CD8-positive, alpha-beta T cell (primary cell): ENCODE measurements at regions of chr19 and their contacts with region 1.

Region 1: DNA sequence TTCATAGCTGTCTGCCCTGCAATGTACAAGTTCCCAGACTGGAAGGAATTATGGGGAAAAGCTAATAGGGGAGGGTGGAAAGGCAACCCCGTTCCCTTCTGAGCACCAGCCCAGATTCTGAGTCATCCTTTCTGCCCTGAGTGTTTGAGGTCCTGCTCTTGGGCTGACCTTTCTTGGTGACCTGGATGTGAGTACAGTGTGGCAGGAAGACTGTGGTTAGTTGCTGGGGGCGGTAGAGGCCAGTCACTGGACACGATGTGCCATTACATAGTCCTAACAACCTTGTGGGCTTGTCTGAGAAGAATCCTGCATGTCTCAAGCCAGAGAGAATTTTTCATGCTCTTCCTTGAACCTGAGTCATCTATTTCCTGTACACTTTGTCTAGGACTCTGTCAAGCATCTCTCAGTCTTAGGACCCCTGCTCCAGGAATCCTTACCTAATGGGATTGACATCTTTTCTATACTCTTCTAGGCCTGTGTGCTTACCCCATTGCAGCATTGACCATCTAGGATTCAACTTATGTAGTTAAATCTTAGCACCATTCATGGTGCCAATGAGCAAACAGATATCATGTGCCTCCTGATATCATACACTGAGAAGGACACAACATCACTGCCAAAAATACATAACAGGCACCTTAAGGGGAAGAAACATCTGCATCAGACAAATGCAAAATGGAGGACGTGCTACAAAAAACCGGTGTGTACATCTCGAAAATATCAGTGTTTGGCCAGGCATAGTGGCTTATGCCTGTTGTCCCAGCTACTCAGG is 8.1 kb upstream of the ANGPTL4 start:
- DNase-seq: no peak
- ATAC-seq: no peak
- H3K4me3 ChIP-seq: no peak overlapping the region
- H3K4me3 Mint-ChIP-seq: no peak overlapping the region
- H3K27ac ChIP-seq: no peak overlapping the region
- H3K27ac Mint-ChIP-seq: no peak overlapping the region
- H3K4me1 ChIP-seq: peaks cover 7% of the 10 kb centered on the region
- H3K4me1 Mint-ChIP-seq: no peaks in the 10 kb centered on the region
- H3K27me3 ChIP-seq: peaks cover 0 to 21% of the 10 kb centered on the region in 2 experiments
- H3K27me3 Mint-ChIP-seq: peaks cover 13% of the 10 kb centered on the region
- CTCF ChIP-seq: no peak

Region 2: DNA sequence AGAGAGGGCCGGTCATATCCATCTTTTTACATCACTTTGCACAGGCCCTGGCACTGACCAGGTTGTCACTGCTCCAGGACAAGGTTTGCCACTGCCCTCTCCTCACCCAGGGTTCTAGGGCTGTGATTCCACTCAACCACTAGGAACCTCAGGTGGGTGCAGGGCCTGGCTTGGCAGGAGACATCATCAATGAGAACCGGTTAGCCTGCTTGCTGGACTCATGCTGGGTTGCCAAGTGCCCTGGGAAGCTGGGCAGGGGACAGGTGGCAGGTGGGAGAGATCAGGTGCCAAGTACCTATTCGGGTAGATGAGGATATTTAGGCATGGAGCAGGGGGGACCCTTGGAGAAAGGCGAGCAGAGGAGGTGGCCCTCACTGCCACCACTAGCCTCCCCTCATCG is 150.9 kb before region 1 on chr19:
- CTCF ChIA-PET with region 1: no interaction called
- POLR2A ChIA-PET with region 1: no interaction called
- intact Hi-C with region 1: no loop called
- DNase-seq: no peak
- ATAC-seq: no peak
- H3K4me3 ChIP-seq: no peak overlapping the region
- H3K4me3 Mint-ChIP-seq: no peak overlapping the region
- H3K27ac ChIP-seq: no peak overlapping the region
- H3K27ac Mint-ChIP-seq: no peak overlapping the region
- H3K4me1 ChIP-seq: peaks cover 7% of the 10 kb centered on the region
- H3K4me1 Mint-ChIP-seq: peaks cover 6% of the 10 kb centered on the region
- H3K27me3 ChIP-seq: no peaks in the 10 kb centered on the region
- H3K27me3 Mint-ChIP-seq: no peaks in the 10 kb centered on the region
- CTCF ChIP-seq: no peak

Region 3: GRCh38 chr19:8342684-8343482 is 12.9 kb before region 1 on chr19 and contains the start of gene KANK3:
- CTCF ChIA-PET with region 1: interaction called, 26 read pairs
- POLR2A ChIA-PET with region 1: interaction called, 4 read pairs
- intact Hi-C with region 1: no loop called
- DNase-seq: peak; percentile 84 to 96 (median 91)
- ATAC-seq: peak; percentile 99
- H3K4me3 ChIP-seq: peak within 1 kb of the TSS; percentile 70 to 86
- H3K4me3 Mint-ChIP-seq: peak within 1 kb of the TSS; percentile 79
- H3K27ac ChIP-seq: peak within 1 kb of the TSS; percentile 42 to 78
- H3K27ac Mint-ChIP-seq: peak within 1 kb of the TSS; percentile 22
- H3K4me1 ChIP-seq: peaks cover 13% of the 10 kb centered on the region
- H3K4me1 Mint-ChIP-seq: peaks cover 5% of the 10 kb centered on the region
- H3K27me3 ChIP-seq: peaks cover 0 to 3% of the 10 kb centered on the region in 2 experiments
- H3K27me3 Mint-ChIP-seq: peaks cover 7% of the 10 kb centered on the region
- CTCF ChIP-seq: no peak
- total RNA-seq, gene KANK3: 0.78 to 1.4 TPM

Region 4: GRCh38 chr19:8396563-8397203 is 40.9 kb after region 1 on chr19:
- CTCF ChIA-PET with region 1: interaction called, 34 read pairs
- POLR2A ChIA-PET with region 1: no interaction called
- intact Hi-C with region 1: loop called in 1 of 2 experiments (anchors 1 kb)
- DNase-seq: peak; percentile 49 to 88 (median 69)
- ATAC-seq: peak; percentile 98
- H3K4me3 ChIP-seq: no peak overlapping the region
- H3K4me3 Mint-ChIP-seq: peak overlapping the region; percentile 6
- H3K27ac ChIP-seq: peak overlapping the region in 1 of 2 experiments; percentile 15
- H3K27ac Mint-ChIP-seq: peak overlapping the region; percentile 71
- H3K4me1 ChIP-seq: peaks cover 23% of the 10 kb centered on the region
- H3K4me1 Mint-ChIP-seq: peaks cover 31% of the 10 kb centered on the region
- H3K27me3 ChIP-seq: no peaks in the 10 kb centered on the region
- H3K27me3 Mint-ChIP-seq: no peaks in the 10 kb centered on the region
- CTCF ChIP-seq: peak; percentile 60

Region 5: GRCh38 chr19:8585894-8586750 is 230.3 kb after region 1 on chr19:
- CTCF ChIA-PET with region 1: interaction called, 32 read pairs
- POLR2A ChIA-PET with region 1: no interaction called
- intact Hi-C with region 1: loop called (anchors 5 kb)
- DNase-seq: peak in 8 of 9 experiments; percentile 28 to 77 (median 66)
- ATAC-seq: peak; percentile 70
- H3K4me3 ChIP-seq: no peak overlapping the region
- H3K4me3 Mint-ChIP-seq: no peak overlapping the region
- H3K27ac ChIP-seq: no peak overlapping the region
- H3K27ac Mint-ChIP-seq: no peak overlapping the region
- H3K4me1 ChIP-seq: peaks cover 2% of the 10 kb centered on the region
- H3K4me1 Mint-ChIP-seq: peaks cover 4% of the 10 kb centered on the region
- H3K27me3 ChIP-seq: no peaks in the 10 kb centered on the region
- H3K27me3 Mint-ChIP-seq: no peaks in the 10 kb centered on the region
- CTCF ChIP-seq: peak; percentile 23

Region 6: GRCh38 chr19:8846819-8847218 is 491.0 kb after region 1 on chr19:
- CTCF ChIA-PET with region 1: no interaction called
- POLR2A ChIA-PET with region 1: no interaction called
- intact Hi-C with region 1: no loop called
- DNase-seq: no peak
- ATAC-seq: no peak
- H3K4me3 ChIP-seq: no peak overlapping the region
- H3K4me3 Mint-ChIP-seq: no peak overlapping the region
- H3K27ac ChIP-seq: no peak overlapping the region
- H3K27ac Mint-ChIP-seq: no peak overlapping the region
- H3K4me1 ChIP-seq: no peaks in the 10 kb centered on the region
- H3K4me1 Mint-ChIP-seq: no peaks in the 10 kb centered on the region
- H3K27me3 ChIP-seq: no peaks in the 10 kb centered on the region
- H3K27me3 Mint-ChIP-seq: peaks cover 17% of the 10 kb centered on the region
- CTCF ChIP-seq: no peak

Region 7: DNA sequence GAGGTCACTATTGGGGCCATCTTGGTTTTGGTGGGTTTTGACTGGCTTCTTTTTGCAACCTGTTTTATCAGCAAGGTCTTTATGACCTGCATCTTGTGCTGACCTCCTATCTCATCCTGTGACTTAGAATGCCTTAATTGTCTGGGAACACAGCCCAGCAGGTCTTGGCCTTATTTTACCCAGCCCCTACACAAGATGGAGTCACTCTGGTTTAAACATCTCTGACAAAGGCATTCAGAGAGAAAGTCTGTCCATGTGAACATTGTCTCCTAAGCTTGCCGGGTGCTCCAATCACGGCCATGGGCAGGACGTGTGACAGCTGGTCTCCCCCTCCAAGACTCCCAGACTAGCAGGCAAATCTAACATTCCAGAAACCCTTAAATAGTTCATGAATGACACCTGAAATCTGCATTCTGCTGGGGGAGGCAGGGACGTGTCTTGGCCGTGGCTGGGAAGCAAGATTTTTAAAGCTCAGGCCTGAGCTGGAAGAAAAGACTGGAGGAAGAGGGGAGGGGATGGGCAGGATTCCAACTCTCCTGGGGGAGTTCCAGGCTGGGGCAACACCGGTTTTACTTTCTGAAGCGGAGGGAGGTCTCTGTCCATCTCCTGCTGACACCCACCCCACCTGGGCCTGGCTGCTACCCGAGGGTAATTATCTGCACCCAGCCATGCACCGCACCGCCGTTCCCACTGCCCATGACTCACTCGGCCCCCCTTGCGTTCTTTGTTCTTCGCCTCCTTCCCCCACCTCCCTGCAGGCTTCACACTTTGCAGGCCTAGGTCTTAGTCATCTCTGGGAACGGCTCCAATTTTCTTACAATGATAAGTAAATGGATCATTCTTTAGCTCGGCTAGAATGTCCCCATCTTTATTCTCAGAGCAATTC is 719.5 kb after region 1 on chr19:
- CTCF ChIA-PET with region 1: no interaction called
- POLR2A ChIA-PET with region 1: no interaction called
- intact Hi-C with region 1: loop called in 1 of 2 experiments (anchors 5 kb)
- DNase-seq: peak in 2 of 9 experiments; percentile 4 to 11
- ATAC-seq: no peak
- H3K4me3 ChIP-seq: no peak overlapping the region
- H3K4me3 Mint-ChIP-seq: no peak overlapping the region
- H3K27ac ChIP-seq: no peak overlapping the region
- H3K27ac Mint-ChIP-seq: no peak overlapping the region
- H3K4me1 ChIP-seq: no peaks in the 10 kb centered on the region
- H3K4me1 Mint-ChIP-seq: peaks cover 2% of the 10 kb centered on the region
- H3K27me3 ChIP-seq: no peaks in the 10 kb centered on the region
- H3K27me3 Mint-ChIP-seq: no peaks in the 10 kb centered on the region
- CTCF ChIP-seq: no peak